ENCODE measurements at regions of chr12 and their contacts with region 1.

Region 1: GRCh38 chr12:9049520-9050133 is 60.3 kb downstream of the KLRG1 start:
- DNase-seq: peak; percentile 48
- ATAC-seq: peak; percentile 91
- H3K4me3 ChIP-seq: no peak overlapping the region
- H3K27ac ChIP-seq: no peak overlapping the region
- H3K4me1 ChIP-seq: no peaks in the 10 kb centered on the region
- H3K27me3 ChIP-seq: peaks cover 6% of the 10 kb centered on the region; the same call in 1 of the 2 replicates
- CTCF ChIP-seq: peak; percentile 47 to 64 (median 63); a peak in 5 of 6 replicates
- POLR2A ChIP-seq: no peak
- RAD21 ChIP-seq: peak; percentile 65

Region 2: GRCh38 chr12:8499616-8500015 is 550.0 kb before region 1 on chr12:
- CTCF ChIA-PET with region 1: interaction called, 16 read pairs
- POLR2A ChIA-PET with region 1: no interaction called
- RAD21 ChIA-PET with region 1: no interaction called
- intact Hi-C with region 1: no loop called
- DNase-seq: no peak
- ATAC-seq: no peak
- H3K4me3 ChIP-seq: no peak overlapping the region
- H3K27ac ChIP-seq: no peak overlapping the region
- H3K4me1 ChIP-seq: no peaks in the 10 kb centered on the region
- H3K27me3 ChIP-seq: peaks cover 51% of the 10 kb centered on the region
- CTCF ChIP-seq: peak in 1 of 3 experiments; percentile 23; a peak in 1 of 6 replicates
- POLR2A ChIP-seq: no peak
- RAD21 ChIP-seq: no peak; the same call in 1 of the 2 replicates

Region 3: DNA sequence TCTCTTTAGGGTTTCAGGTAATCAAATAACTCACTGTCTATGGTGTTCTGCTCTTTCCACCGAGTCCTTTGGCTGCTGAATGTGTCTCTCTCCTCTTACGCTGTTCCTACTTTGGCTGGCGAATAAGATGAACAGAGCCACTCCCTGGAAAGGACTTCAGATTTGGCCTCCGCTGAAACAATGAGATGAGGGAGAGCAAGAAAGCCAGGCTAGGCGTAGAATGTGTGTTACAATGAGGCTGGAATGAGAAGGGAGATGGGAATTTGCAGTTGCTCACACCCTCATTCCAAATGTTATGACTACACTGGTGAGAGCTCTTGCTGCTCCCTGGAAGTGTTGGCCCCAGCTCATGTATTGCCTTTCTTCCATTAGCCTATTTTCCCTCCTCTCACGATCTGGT is 387.0 kb before region 1 on chr12 and contains the start of gene MFAP5:
- CTCF ChIA-PET with region 1: interaction called, 31 read pairs
- POLR2A ChIA-PET with region 1: no interaction called
- RAD21 ChIA-PET with region 1: interaction called, 3 to 9 read pairs
- intact Hi-C with region 1: loop called (anchors 5 kb)
- DNase-seq: no peak
- ATAC-seq: no peak
- H3K4me3 ChIP-seq: no peak within 1 kb of the TSS
- H3K27ac ChIP-seq: no peak within 1 kb of the TSS
- H3K4me1 ChIP-seq: 0 out of 4 replicates have a peak, but pooled peaks cover 0 to 3% of the 10 kb centered on the region in 2 experiments
- H3K27me3 ChIP-seq: peaks cover 16% of the 10 kb centered on the region
- CTCF ChIP-seq: no peak
- POLR2A ChIP-seq: no peak
- RAD21 ChIP-seq: no peak
- total RNA-seq, gene MFAP5: not detected

Region 4: GRCh38 chr12:8681041-8681902 is 368.4 kb before region 1 on chr12:
- CTCF ChIA-PET with region 1: interaction called, 23 read pairs
- POLR2A ChIA-PET with region 1: interaction called, 4 read pairs
- RAD21 ChIA-PET with region 1: interaction called in 1 of 2 experiments, 4 read pairs
- intact Hi-C with region 1: loop called (anchors 1 kb)
- DNase-seq: no peak
- ATAC-seq: 0 out of 2 replicates have a peak, but pooled peaks have one; percentile 11
- H3K4me3 ChIP-seq: no peak overlapping the region
- H3K27ac ChIP-seq: no peak overlapping the region
- H3K4me1 ChIP-seq: peaks cover 2% of the 10 kb centered on the region in 2 experiments; a peak in 1 of 4 replicates
- H3K27me3 ChIP-seq: no peaks in the 10 kb centered on the region
- CTCF ChIP-seq: no peak
- POLR2A ChIP-seq: no peak
- RAD21 ChIP-seq: no peak

Region 5: GRCh38 chr12:8949342-8950220 is 100.0 kb before region 1 on chr12 and contains the start of gene M6PR:
- CTCF ChIA-PET with region 1: interaction called, 8 read pairs
- POLR2A ChIA-PET with region 1: interaction called, 5 read pairs
- RAD21 ChIA-PET with region 1: no interaction called
- intact Hi-C with region 1: loop called (anchors 5 kb)
- DNase-seq: peak; percentile 90
- ATAC-seq: peak; percentile 91
- H3K4me3 ChIP-seq: peak within 1 kb of the TSS; percentile 70 to 93
- H3K27ac ChIP-seq: peak within 1 kb of the TSS; percentile 83
- H3K4me1 ChIP-seq: peaks cover 3 to 26% of the 10 kb centered on the region in 2 experiments; a peak in 3 of 4 replicates
- H3K27me3 ChIP-seq: no peaks in the 10 kb centered on the region
- CTCF ChIP-seq: peak in 2 of 3 experiments; percentile 38 to 51; a peak in 3 of 6 replicates
- POLR2A ChIP-seq: peak; percentile 58
- RAD21 ChIP-seq: peak; percentile 57
- total RNA-seq, gene M6PR: 142 TPM

Region 6: DNA sequence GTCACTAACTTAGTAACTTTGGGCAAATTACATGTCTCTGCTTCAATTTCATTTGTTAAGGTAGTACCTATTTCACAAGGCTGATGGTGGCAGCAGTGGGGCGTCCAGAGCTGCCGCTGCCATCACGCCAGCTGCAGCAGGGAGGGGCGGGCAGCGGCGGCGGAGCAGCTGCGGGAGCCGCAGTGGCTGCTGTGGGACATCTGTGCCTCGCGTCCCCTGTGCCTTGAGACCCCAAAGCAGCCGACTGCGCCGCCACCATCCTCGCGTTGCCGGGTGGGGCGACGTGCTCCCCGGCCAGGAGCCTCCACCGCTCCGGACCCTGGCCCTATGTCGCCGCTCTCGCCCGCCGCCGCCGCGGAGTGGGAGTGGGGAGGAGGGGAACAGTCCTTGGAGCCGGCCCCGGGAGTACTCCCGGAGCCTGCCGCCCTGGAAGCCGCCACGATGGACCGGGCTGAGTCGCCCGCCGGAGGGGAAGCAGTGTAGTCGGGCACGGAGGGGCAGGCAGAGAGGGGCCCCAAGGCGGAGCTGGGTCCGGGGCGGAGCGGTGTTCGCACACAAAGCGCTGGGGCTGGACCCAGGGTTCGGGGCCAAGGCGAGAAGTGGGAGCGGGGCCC is 14.7 kb after region 1 on chr12:
- CTCF ChIA-PET with region 1: interaction called, 14 read pairs
- POLR2A ChIA-PET with region 1: interaction called, 3 read pairs
- RAD21 ChIA-PET with region 1: interaction called in 1 of 2 experiments, 3 read pairs
- intact Hi-C with region 1: no loop called
- DNase-seq: peak; percentile 42
- ATAC-seq: peak; percentile 63
- H3K4me3 ChIP-seq: peak overlapping the region; percentile 80 to 81
- H3K27ac ChIP-seq: peak overlapping the region; percentile 99
- H3K4me1 ChIP-seq: peaks cover 8 to 19% of the 10 kb centered on the region in 2 experiments; a peak in 3 of 4 replicates
- H3K27me3 ChIP-seq: no peaks in the 10 kb centered on the region
- CTCF ChIP-seq: peak in 2 of 3 experiments; percentile 34 to 48; a peak in 4 of 6 replicates
- POLR2A ChIP-seq: no peak
- RAD21 ChIP-seq: peak; percentile 69

Measured in HCT116 (cell line).